Prostate gland (tissue), 2 donors: ENCODE measurements at regions of chr12 and their contacts with region 1.

Region 1: GRCh38 chr12:49644620-49644994 is 21.2 kb downstream of the PRPF40B start:
- DNase-seq: peak; percentile 75
- H3K4me3 ChIP-seq: no peak overlapping the region
- H3K27ac ChIP-seq: peak overlapping the region in 1 of 2 donors; percentile 20
- H3K4me1 ChIP-seq: no peaks in the 10 kb centered on the region
- H3K27me3 ChIP-seq: no peaks in the 10 kb centered on the region
- CTCF ChIP-seq: peak; percentile 83 to 97 (median 95)
- POLR2A ChIP-seq: no peak

Region 2: DNA sequence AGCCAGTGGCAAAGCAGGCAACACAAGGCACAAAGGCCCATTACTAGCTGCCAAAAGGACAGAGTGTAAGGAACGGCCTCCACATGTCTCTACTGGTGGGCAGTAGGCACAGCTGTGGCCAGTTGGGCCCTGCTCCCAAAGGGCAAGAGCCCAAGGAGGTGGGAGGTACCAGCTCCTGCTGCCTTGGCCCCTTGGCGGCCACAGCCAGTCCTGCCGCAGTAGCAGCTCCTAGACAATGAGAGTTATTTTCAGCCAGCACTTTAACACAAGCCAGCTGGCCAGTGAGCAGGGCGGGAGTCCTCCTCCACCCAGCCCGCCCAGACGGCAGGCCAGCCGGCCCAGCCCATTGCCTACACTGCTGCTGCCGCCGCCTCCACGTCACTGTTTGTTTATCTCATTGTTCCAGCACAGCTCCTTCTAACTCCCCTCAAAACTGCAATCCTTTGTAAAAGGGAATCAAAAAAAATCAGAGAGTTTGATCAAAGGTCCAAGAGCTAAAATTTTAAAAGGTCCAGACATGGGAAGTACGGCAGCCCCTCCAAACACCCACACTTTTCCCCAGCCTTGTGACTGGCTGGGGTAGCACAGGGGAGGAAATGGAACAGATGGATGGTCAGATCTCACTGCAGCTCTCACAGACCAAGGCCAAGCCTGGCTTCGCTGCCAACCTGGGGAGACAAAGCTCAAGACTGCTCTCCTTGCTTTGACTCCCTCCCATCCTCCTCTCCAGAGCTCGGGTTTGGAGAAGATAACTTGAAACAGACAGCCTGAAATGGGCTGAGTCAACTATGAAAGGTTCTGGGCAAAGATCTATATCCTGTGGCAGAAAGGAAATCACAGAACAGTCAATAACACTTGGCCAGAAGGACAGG is 29.1 kb after region 1 on chr12:
- intact Hi-C with region 1: loop called (anchors 1 kb)
- DNase-seq: peak; percentile 86
- H3K4me3 ChIP-seq: no peak overlapping the region
- H3K27ac ChIP-seq: peak overlapping the region; percentile 80 to 86
- H3K4me1 ChIP-seq: peaks cover 22% of the 10 kb centered on the region
- H3K27me3 ChIP-seq: no peaks in the 10 kb centered on the region
- CTCF ChIP-seq: peak in 2 of 4 experiments; percentile 51 to 64
- POLR2A ChIP-seq: peak; percentile 69

Region 3: GRCh38 chr12:49707128-49707811 is 62.7 kb after region 1 on chr12 and contains the start of gene FMNL3:
- intact Hi-C with region 1: loop called (anchors 1 kb)
- DNase-seq: peak; percentile 96
- H3K4me3 ChIP-seq: peak within 1 kb of the TSS; percentile 46 to 61
- H3K27ac ChIP-seq: peak within 1 kb of the TSS; percentile 69 to 73
- H3K4me1 ChIP-seq: no peaks in the 10 kb centered on the region
- H3K27me3 ChIP-seq: no peaks in the 10 kb centered on the region
- CTCF ChIP-seq: peak; percentile 97 to 100 (median 100)
- POLR2A ChIP-seq: peak; percentile 29
- total RNA-seq, gene FMNL3: 4.5 to 52.9 TPM